Activated CD4-positive, alpha-beta memory T cell treated with anti-CD3 and anti-CD28 coated beads for 36 hours (primary cell): ENCODE measurements at regions of chr5 and their contacts with region 1.

Region 1: DNA sequence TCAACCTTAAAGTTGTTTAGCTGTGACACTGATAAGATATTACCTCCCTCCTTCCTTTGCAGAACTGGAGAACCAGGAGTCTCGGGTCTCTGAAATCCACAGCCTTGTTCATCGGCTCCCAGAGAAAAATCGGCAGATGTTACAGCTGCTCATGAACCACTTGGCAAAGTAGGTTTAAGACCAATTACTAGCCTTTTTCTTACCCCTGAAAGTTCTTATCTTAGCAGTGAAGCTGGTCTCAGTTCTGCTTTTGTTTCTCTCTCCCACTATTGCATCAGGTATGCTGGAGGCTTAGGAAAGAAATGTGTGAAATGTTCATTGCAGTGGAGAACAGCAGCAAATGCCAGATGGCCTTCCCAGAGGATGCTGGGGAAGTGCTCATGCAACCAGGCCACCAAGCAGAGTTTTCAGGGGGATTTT is 287.4 kb downstream of the ARHGAP26 start:
- DNase-seq: no peak
- H3K4me3 Mint-ChIP-seq: no peak overlapping the region
- H3K27ac Mint-ChIP-seq: peak overlapping the region; percentile 85
- H3K4me1 Mint-ChIP-seq: peaks cover 69% of the 10 kb centered on the region
- H3K27me3 Mint-ChIP-seq: no peaks in the 10 kb centered on the region

Region 2: GRCh38 chr5:143023411-143024096 is 34.0 kb before region 1 on chr5:
- CTCF ChIA-PET with region 1: interaction called, 3 read pairs
- POLR2A ChIA-PET with region 1: no interaction called
- intact Hi-C with region 1: loop called (anchors 1 kb)
- DNase-seq: peak; percentile 85
- H3K4me3 Mint-ChIP-seq: no peak overlapping the region
- H3K27ac Mint-ChIP-seq: peak overlapping the region; percentile 59
- H3K4me1 Mint-ChIP-seq: peaks cover 53% of the 10 kb centered on the region
- H3K27me3 Mint-ChIP-seq: no peaks in the 10 kb centered on the region

Region 3: GRCh38 chr5:143101121-143101520 is 43.5 kb after region 1 on chr5:
- CTCF ChIA-PET with region 1: interaction called, 4 read pairs
- POLR2A ChIA-PET with region 1: no interaction called
- intact Hi-C with region 1: loop called (anchors 1 kb)
- DNase-seq: peak; percentile 23
- H3K4me3 Mint-ChIP-seq: no peak overlapping the region
- H3K27ac Mint-ChIP-seq: peak overlapping the region; percentile 90
- H3K4me1 Mint-ChIP-seq: peaks cover 40% of the 10 kb centered on the region
- H3K27me3 Mint-ChIP-seq: no peaks in the 10 kb centered on the region

Region 4: GRCh38 chr5:143188692-143189091 is 131.1 kb after region 1 on chr5:
- CTCF ChIA-PET with region 1: no interaction called
- POLR2A ChIA-PET with region 1: no interaction called
- intact Hi-C with region 1: loop called (anchors 1 kb)
- DNase-seq: no peak
- H3K4me3 Mint-ChIP-seq: no peak overlapping the region
- H3K27ac Mint-ChIP-seq: peak overlapping the region; percentile 56
- H3K4me1 Mint-ChIP-seq: peaks cover 43% of the 10 kb centered on the region
- H3K27me3 Mint-ChIP-seq: no peaks in the 10 kb centered on the region

Region 5: GRCh38 chr5:143213851-143214363 is 156.3 kb after region 1 on chr5:
- CTCF ChIA-PET with region 1: no interaction called
- POLR2A ChIA-PET with region 1: no interaction called
- intact Hi-C with region 1: loop called (anchors 1 kb)
- DNase-seq: peak; percentile 63
- H3K4me3 Mint-ChIP-seq: no peak overlapping the region
- H3K27ac Mint-ChIP-seq: peak overlapping the region; percentile 79
- H3K4me1 Mint-ChIP-seq: peaks cover 57% of the 10 kb centered on the region
- H3K27me3 Mint-ChIP-seq: no peaks in the 10 kb centered on the region